Body of pancreas (tissue), 4 donors: ENCODE measurements at regions of chr19 and their contacts with region 1.

Region 1: DNA sequence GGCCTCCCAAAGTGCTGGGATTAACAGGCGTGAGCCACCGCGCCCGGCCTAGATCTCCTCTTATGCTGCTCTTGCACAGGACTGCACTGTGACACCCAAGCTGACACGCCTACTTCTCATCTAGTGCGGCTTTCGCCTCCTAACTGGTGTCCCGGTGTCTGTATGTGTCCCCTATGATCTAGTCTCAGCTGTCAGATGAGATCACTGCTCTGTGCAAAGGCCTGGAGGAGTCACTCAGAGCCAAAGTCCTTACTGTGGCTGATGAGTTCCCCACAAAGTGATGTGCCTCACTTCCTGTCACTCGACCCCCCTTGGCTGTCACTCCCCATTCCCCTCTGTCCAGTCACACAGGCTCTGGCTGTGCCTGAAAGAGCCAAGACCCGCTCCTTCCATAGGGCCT is 2.5 kb downstream of the ZNF556 start:
- DNase-seq: no peak
- ATAC-seq: no peak
- H3K4me3 ChIP-seq: no peak overlapping the region
- H3K27ac ChIP-seq: no peak overlapping the region
- H3K4me1 ChIP-seq: no peaks in the 10 kb centered on the region
- H3K27me3 ChIP-seq: no peaks in the 10 kb centered on the region
- CTCF ChIP-seq: no peak
- POLR2A ChIP-seq: no peak

Region 2: GRCh38 chr19:2653710-2654707 is 215.6 kb before region 1 on chr19:
- intact Hi-C with region 1: loop called (anchors 10 kb)
- DNase-seq: peak in 3 of 4 donors; percentile 30 to 65 (median 38)
- ATAC-seq: peak; percentile 53
- H3K4me3 ChIP-seq: no peak overlapping the region
- H3K27ac ChIP-seq: peak overlapping the region in 1 of 4 donors; percentile 60
- H3K4me1 ChIP-seq: peaks cover 10% of the 10 kb centered on the region
- H3K27me3 ChIP-seq: no peaks in the 10 kb centered on the region
- CTCF ChIP-seq: no peak
- POLR2A ChIP-seq: no peak